ENCODE measurements at regions of chr5 and their contacts with region 1.

Region 1: GRCh38 chr5:137164961-137165360 is 334.2 kb downstream of the SPOCK1 start:
- DNase-seq: no peak
- H3K4me3 ChIP-seq: no peak overlapping the region
- H3K27ac ChIP-seq: no peak overlapping the region
- H3K4me1 ChIP-seq: no peaks in the 10 kb centered on the region
- H3K27me3 ChIP-seq: no peaks in the 10 kb centered on the region
- CTCF ChIP-seq: no peak
- POLR2A ChIP-seq: no peak

Region 2: DNA sequence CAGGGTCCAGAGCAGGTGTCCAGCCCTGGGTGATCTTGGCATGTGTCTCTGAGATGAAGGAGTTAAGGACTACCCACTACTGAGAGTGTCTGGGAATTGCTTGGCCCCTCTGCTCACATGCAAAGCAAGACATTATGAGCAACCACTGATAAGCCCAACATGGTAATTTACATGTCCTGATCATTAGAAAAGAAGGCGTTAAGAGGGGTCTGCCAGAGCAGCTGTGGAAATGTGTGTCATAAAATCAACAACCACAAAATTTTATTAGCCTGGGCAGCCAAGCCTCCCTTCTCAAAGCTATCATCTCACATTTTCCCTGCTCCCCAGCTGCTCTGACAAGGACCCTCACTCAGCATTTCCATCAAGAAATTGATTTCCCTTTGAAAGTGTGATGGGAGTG is 16.8 kb before region 1 on chr5:
- CTCF ChIA-PET with region 1: interaction called, 3 read pairs
- POLR2A ChIA-PET with region 1: no interaction called
- dilution Hi-C with region 1: no loop called
- intact Hi-C with region 1: loop called (anchors 2 kb)
- DNase-seq: peak; percentile 56
- H3K4me3 ChIP-seq: no peak overlapping the region
- H3K27ac ChIP-seq: no peak overlapping the region
- H3K4me1 ChIP-seq: peaks cover 11% of the 10 kb centered on the region
- H3K27me3 ChIP-seq: no peaks in the 10 kb centered on the region
- CTCF ChIP-seq: no peak
- POLR2A ChIP-seq: no peak